A549 (cell line): ENCODE measurements at regions of chr4 and their contacts with region 1.

Region 1: GRCh38 chr4:48127682-48128394 is 6.2 kb downstream of the TXK start:
- DNase-seq: peak; percentile 49 to 64
- ATAC-seq: peak; percentile 95 to 96
- H3K4me3 ChIP-seq: peak overlapping the region; percentile 28; the same call in 1 of the 3 replicates
- H3K27ac ChIP-seq: peak overlapping the region; percentile 53 to 54; a peak in 2 of 6 replicates
- H3K4me1 ChIP-seq: peaks cover 21% of the 10 kb centered on the region
- CTCF ChIP-seq: peak; percentile 65
- EP300 ChIP-seq: no peak
- POLR2A ChIP-seq: no peak
- RAD21 ChIP-seq: peak; percentile 79

Region 2: GRCh38 chr4:47899639-47900038 is 228.2 kb before region 1 on chr4:
- CTCF ChIA-PET with region 1: no interaction called
- POLR2A ChIA-PET with region 1: no interaction called
- DNase-seq: no peak
- ATAC-seq: no peak
- H3K4me3 ChIP-seq: no peak overlapping the region
- H3K27ac ChIP-seq: no peak overlapping the region
- H3K4me1 ChIP-seq: no peaks in the 10 kb centered on the region
- CTCF ChIP-seq: no peak
- EP300 ChIP-seq: no peak
- POLR2A ChIP-seq: no peak
- RAD21 ChIP-seq: no peak

Region 3: GRCh38 chr4:48141048-48141447 is 13.2 kb after region 1 on chr4:
- CTCF ChIA-PET with region 1: interaction called, 17 read pairs
- POLR2A ChIA-PET with region 1: no interaction called
- DNase-seq: peak; percentile 17 to 33
- ATAC-seq: peak in 1 of 2 experiments; percentile 73; a peak in 2 of 6 replicates
- H3K4me3 ChIP-seq: no peak overlapping the region
- H3K27ac ChIP-seq: no peak overlapping the region
- H3K4me1 ChIP-seq: no peaks in the 10 kb centered on the region; the same call in 2 of the 3 replicates
- CTCF ChIP-seq: peak; percentile 50
- EP300 ChIP-seq: no peak
- POLR2A ChIP-seq: no peak
- RAD21 ChIP-seq: peak; percentile 49 to 50; a peak in 4 of 5 replicates

Region 4: DNA sequence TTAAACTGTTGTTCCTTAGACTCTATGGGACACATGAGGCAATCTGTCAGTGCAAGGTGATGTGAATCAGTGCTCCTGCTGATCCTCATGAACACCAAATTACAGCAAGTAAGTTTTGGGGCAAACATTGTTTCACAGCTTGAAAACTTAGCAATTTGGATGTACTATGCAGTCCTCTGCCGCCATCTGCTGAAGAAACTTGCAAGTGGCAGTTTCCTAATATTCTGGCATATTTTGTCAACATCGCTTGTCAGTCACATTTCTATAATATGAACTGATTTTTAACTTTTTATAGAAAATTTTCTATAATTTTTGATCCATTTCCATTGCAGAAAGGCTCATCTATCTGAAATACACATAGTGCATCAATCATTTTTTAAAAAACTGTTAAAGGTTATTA is 418.5 kb after region 1 on chr4:
- CTCF ChIA-PET with region 1: interaction called, 24 read pairs
- POLR2A ChIA-PET with region 1: no interaction called
- DNase-seq: peak in 1 of 2 experiments; percentile 42
- ATAC-seq: no peak
- H3K4me3 ChIP-seq: no peak overlapping the region
- H3K27ac ChIP-seq: no peak overlapping the region
- H3K4me1 ChIP-seq: no peaks in the 10 kb centered on the region
- CTCF ChIP-seq: peak; percentile 70
- EP300 ChIP-seq: no peak
- POLR2A ChIP-seq: no peak
- RAD21 ChIP-seq: peak; percentile 72 to 79